ENCODE measurements at regions of chr2 and their contacts with region 1.

Region 1: DNA sequence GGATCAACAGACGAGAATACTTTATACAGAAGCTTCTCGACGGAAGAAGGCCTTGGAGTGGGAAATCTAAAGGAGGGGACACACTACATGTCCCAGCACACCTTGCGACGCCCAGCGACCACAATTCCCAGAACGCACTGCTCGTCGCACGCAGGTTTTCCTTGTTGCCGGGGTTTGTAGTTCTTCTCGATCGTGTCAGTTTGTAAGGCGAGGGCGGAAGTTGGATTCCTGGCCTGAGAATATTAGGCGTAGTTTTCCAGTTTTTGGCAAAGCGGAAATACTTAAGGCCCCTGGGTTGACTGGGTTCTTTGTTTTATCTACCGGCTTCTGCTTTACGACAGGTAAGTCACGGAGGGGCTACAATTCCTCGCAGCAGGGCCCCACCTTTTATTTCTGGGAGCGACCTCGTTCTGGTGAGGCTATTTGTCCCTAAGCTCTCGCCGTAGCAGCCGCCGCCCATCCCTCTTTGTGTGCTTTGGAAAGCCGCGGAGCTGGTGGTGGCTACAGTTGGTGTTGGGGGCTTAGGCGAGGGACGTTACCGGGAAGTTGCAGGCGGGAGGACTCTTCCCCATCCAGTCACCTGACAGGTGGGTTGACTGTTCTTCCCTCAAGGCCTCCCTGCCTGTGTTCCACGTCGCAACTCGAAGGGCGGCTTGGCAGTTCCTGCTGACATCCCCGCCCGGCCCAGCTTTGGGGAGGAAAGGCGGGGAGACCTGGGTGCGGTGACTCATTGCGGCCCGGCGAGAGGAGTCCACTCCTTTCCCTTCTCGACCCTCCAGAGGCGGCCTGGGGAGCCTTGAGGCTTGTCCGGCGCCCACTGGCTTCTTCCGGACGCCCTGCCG is at the start of gene DYNC1I2:
- DNase-seq: peak; percentile 70 to 96
- H3K4me3 ChIP-seq: peak within 1 kb of the TSS; percentile 76 to 85
- H3K27ac ChIP-seq: peak within 1 kb of the TSS; percentile 84 to 92
- H3K4me1 ChIP-seq: peaks cover 0 to 9% of the 10 kb centered on the region in 2 donors
- H3K27me3 ChIP-seq: no peaks in the 10 kb centered on the region
- CTCF ChIP-seq: no peak
- total RNA-seq, gene DYNC1I2: 81.0 TPM

Region 2: DNA sequence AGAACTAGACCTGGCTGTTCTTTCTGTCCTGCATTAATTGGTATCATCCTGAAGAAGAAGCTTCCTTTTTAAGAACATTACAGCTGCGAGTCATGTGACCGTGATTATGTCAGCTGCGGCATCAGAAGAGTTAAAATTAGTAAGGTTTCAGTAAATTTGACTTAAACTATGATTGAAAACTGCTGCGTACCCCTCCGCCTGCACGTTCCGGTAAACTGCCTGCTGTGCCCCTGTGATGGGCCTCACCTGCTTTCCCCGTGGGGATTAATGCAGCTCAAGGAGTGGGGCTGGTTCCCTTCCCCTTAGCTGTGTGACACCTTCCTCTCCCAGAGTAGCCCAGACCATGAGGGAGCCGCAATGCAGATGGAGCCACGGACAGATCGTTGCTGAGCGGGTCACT is 1545.6 kb before region 1 on chr2:
- intact Hi-C with region 1: no loop called
- DNase-seq: no peak
- H3K4me3 ChIP-seq: no peak overlapping the region
- H3K27ac ChIP-seq: no peak overlapping the region
- H3K4me1 ChIP-seq: no peaks in the 10 kb centered on the region
- H3K27me3 ChIP-seq: no peaks in the 10 kb centered on the region
- CTCF ChIP-seq: no peak

Region 3: DNA sequence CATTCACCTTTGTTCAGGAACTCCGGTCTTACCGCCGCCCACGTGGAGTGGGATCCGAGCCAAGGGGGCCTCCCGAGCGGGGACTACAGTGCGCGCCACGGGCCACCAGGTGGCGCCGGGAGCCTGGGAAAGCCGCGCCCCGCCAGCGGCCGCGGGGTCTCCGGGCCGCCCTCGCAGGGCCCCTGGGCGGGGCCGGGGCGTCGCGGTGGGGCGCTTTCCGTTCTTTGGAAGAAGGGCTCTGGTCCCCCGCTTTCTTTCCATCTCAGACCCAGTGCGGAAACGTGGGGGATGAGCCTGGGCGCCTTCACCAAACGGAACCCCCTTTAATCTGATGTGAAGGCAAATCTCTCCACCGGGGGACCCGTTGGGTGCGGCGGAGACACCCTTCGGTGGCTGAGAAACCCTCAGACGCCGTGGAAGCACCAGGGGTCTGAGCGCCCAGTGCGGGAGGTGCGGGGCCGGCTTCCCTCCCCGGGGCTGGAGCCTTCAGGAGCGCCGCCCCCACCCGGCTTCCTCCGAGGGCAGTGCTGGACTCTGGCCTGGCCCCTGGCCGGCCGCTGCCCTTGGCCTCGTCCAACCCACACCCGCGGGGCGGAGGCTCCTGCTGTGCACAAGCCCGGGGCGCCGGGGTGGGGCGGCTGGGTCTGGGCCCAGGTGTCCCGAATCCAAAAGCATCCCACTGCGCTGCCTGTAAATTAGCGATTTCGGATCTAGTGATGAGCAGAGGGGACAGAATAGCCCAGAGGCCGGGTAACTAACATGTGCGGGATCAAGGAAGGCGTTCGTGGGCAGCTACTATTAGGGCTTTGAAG is 713.8 kb before region 1 on chr2:
- intact Hi-C with region 1: loop called (anchors 5 kb)
- DNase-seq: peak; percentile 18 to 90
- H3K4me3 ChIP-seq: peak overlapping the region; percentile 77 to 92
- H3K27ac ChIP-seq: peak overlapping the region; percentile 76 to 77
- H3K4me1 ChIP-seq: peaks cover 0 to 7% of the 10 kb centered on the region in 2 donors
- H3K27me3 ChIP-seq: no peaks in the 10 kb centered on the region
- CTCF ChIP-seq: peak; percentile 74 to 97 (median 80)

Region 4: DNA sequence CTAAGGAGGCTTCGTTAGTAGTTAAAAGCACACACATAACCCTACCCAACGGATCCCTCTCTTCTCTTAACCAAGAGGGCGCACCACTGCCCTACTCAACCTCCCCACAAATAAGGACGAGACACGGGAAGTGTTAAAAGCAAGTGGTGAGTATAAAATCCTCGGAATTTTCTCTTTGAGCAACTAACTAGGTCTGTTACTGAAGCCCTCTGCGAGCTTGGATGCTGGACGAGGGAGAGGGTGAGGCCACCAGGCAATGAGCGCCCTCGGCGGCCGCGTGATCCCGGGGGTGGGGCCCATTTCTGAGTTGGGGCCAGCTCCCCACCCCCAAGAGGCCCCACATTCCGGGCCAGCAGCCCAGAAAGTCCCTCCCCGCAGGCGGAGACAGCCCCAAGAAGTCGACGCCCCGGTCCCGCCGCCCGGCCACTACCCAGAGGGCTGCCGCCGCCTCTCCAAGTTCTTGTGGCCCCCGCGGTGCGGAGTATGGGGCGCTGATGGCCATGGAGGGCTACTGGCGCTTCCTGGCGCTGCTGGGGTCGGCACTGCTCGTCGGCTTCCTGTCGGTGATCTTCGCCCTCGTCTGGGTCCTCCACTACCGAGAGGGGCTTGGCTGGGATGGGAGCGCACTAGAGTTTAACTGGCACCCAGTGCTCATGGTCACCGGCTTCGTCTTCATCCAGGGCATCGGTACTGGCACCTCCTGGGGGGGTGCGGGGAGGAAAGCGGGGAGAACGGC is 165.3 kb before region 1 on chr2 and contains the start of gene CYBRD1:
- intact Hi-C with region 1: loop called (anchors 5 kb)
- DNase-seq: peak; percentile 47 to 93
- H3K4me3 ChIP-seq: peak within 1 kb of the TSS; percentile 72 to 90
- H3K27ac ChIP-seq: peak within 1 kb of the TSS; percentile 94 to 97
- H3K4me1 ChIP-seq: peaks cover 0 to 23% of the 10 kb centered on the region in 2 donors
- H3K27me3 ChIP-seq: no peaks in the 10 kb centered on the region
- CTCF ChIP-seq: no peak
- total RNA-seq, gene CYBRD1: 222 TPM

Region 5: GRCh38 chr2:171540437-171540836 is 147.1 kb before region 1 on chr2:
- intact Hi-C with region 1: no loop called
- DNase-seq: no peak
- H3K4me3 ChIP-seq: no peak overlapping the region
- H3K27ac ChIP-seq: no peak overlapping the region
- H3K4me1 ChIP-seq: no peaks in the 10 kb centered on the region
- H3K27me3 ChIP-seq: no peaks in the 10 kb centered on the region
- CTCF ChIP-seq: no peak

Region 6: GRCh38 chr2:171574149-171574795 is 113.2 kb before region 1 on chr2:
- intact Hi-C with region 1: loop called (anchors 5 kb)
- DNase-seq: peak in 1 of 2 donors; percentile 88
- H3K4me3 ChIP-seq: peak overlapping the region in 1 of 2 donors; percentile 21
- H3K27ac ChIP-seq: no peak overlapping the region
- H3K4me1 ChIP-seq: no peaks in the 10 kb centered on the region
- H3K27me3 ChIP-seq: no peaks in the 10 kb centered on the region
- CTCF ChIP-seq: peak; percentile 78 to 99 (median 98)

Region 7: GRCh38 chr2:171893824-171894611 is 206.5 kb after region 1 on chr2 and contains the start of gene SLC25A12:
- intact Hi-C with region 1: loop called (anchors 10 kb)
- DNase-seq: peak; percentile 12 to 85
- H3K4me3 ChIP-seq: peak within 1 kb of the TSS; percentile 95 to 98
- H3K27ac ChIP-seq: peak within 1 kb of the TSS; percentile 66 to 87
- H3K4me1 ChIP-seq: peaks cover 0 to 15% of the 10 kb centered on the region in 2 donors
- H3K27me3 ChIP-seq: no peaks in the 10 kb centered on the region
- CTCF ChIP-seq: no peak
- total RNA-seq, gene SLC25A12: 11.9 TPM

Region 8: GRCh38 chr2:172095146-172095904 is 407.8 kb after region 1 on chr2:
- intact Hi-C with region 1: loop called (anchors 5 kb)
- DNase-seq: no peak
- H3K4me3 ChIP-seq: peak overlapping the region; percentile 48 to 67
- H3K27ac ChIP-seq: no peak overlapping the region
- H3K4me1 ChIP-seq: peaks cover 30 to 48% of the 10 kb centered on the region in 2 donors
- H3K27me3 ChIP-seq: peaks cover 66% of the 10 kb centered on the region
- CTCF ChIP-seq: no peak

Region 9: DNA sequence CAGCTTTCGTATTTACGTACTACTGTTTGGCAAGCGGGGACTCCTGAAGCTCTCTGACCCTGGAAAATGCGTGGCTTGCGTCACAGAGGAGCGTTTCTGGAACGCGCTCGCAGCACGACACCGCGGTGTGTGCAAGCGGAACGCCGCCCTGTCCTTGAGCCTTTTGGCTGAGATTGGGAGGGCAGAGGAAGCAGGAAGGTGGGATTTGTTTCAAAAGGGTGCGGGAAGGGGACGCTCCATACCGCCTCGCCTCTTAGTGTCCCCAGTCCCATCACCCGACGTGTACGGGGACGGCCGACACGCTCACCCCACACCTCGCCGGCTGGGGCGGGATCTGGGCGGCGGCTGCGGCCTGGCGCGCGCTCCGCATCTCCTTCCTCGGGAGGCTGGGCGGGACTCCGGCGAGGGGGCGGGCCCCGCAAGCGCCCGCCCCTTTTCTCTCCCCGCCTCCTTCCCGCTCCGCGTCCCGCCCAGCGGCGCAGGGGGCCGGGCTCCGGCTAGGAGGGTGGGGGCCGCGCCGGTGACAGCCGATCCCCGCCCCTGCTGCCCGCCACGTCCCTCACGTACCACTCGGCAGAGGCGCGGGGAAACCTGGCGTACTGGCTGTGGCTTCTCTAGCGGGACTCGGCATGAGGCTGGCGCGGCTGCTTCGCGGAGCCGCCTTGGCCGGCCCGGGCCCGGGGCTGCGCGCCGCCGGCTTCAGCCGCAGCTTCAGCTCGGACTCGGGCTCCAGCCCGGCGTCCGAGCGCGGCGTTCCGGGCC is 868.2 kb after region 1 on chr2 and contains the start of gene PDK1:
- intact Hi-C with region 1: loop called (anchors 5 kb)
- DNase-seq: peak; percentile 52 to 93
- H3K4me3 ChIP-seq: peak within 1 kb of the TSS; percentile 96 to 97
- H3K27ac ChIP-seq: peak within 1 kb of the TSS; percentile 93 to 95
- H3K4me1 ChIP-seq: peaks cover 0 to 10% of the 10 kb centered on the region in 2 donors
- H3K27me3 ChIP-seq: no peaks in the 10 kb centered on the region
- CTCF ChIP-seq: no peak
- total RNA-seq, gene PDK1: 24.2 TPM